Heart left ventricle (tissue), 16 donors: ENCODE measurements at regions of chr7 and their contacts with region 1.

Region 1: GRCh38 chr7:99616359-99617191 is at the start of gene ZSCAN25:
- DNase-seq: peak; percentile 83 to 93 (median 93)
- ATAC-seq: peak; percentile 98
- H3K4me3 ChIP-seq: peak within 1 kb of the TSS; percentile 74 to 99 (median 95)
- H3K27ac ChIP-seq: peak within 1 kb of the TSS; percentile 43 to 93 (median 86)
- H3K4me1 ChIP-seq: peaks cover 0 to 17% (median 11%) of the 10 kb centered on the region in 12 donors
- H3K27me3 ChIP-seq: no peaks in the 10 kb centered on the region
- CTCF ChIP-seq: peak in 11 of 12 donors; percentile 12 to 48 (median 43)
- POLR2A ChIP-seq: peak in 1 of 2 donors; percentile 78
- total RNA-seq, gene ZSCAN25: 5.6 to 12.0 (median 8.3) TPM

Region 2: GRCh38 chr7:99551767-99552463 is 64.7 kb before region 1 on chr7 and contains the start of gene FAM200A:
- intact Hi-C with region 1: loop called in 1 of 10 experiments (anchors 5 kb)
- DNase-seq: peak; percentile 91 to 94 (median 93)
- ATAC-seq: peak; percentile 98 to 100 (median 98)
- H3K4me3 ChIP-seq: peak within 1 kb of the TSS; percentile 54 to 99 (median 83)
- H3K27ac ChIP-seq: peak within 1 kb of the TSS; percentile 6 to 95 (median 86)
- H3K4me1 ChIP-seq: peaks cover 0 to 26% (median 15%) of the 10 kb centered on the region in 12 donors
- H3K27me3 ChIP-seq: no peaks in the 10 kb centered on the region
- CTCF ChIP-seq: no peak
- POLR2A ChIP-seq: peak in 1 of 2 donors; percentile 72
- total RNA-seq, gene FAM200A: 4.7 to 7.1 (median 5.3) TPM

Region 3: DNA sequence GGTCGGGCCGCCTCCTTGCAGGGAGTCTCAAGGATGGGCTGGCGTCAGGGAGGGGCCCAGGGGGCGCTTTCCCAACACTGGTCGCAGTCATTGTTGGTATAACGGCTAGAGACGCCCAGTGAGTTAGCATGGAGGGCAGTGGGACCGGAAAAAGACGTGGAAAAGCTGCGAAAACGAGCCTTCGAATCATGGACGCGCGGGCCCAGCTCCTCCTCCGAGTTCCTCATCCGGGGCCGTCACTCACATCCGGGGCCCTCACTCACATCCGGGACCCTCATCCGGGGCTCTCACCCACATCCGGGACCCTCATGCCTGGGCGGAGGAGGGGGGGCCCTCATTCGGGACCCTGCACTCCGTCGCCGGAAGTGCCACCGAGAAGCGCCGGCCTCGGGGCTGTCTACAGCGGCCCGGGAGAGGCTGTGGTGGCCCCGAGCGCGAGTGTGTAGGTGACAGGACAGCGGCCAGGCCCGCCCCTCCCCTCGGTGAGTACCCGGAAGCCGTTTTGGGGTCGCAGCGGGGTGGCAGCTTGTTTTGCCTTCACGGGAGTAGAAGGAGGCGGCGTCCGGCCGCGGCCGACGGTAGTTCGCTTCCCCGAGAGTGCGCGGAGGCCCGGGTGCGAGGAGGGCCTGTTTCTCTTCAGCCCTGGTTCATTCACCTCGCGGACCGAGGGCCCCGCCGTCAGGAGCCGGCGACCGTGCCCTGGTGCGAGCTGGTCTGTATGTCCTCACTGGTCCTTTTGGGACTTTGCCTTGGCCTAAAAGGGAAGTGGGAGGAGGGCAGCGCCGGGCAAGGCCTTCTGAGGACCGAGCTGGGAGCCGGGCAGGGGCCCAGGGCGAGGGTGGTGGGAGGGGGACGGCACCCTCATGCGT is 58.0 kb before region 1 on chr7 and contains the start of gene ZNF655:
- intact Hi-C with region 1: loop called in 3 of 10 experiments (anchors 1 to 5 kb)
- DNase-seq: peak; percentile 93 to 95 (median 94)
- ATAC-seq: peak; percentile 96 to 98 (median 98)
- H3K4me3 ChIP-seq: peak within 1 kb of the TSS; percentile 58 to 99 (median 88)
- H3K27ac ChIP-seq: peak within 1 kb of the TSS; percentile 91 to 99 (median 96)
- H3K4me1 ChIP-seq: peaks cover 0 to 46% (median 23%) of the 10 kb centered on the region in 12 donors
- H3K27me3 ChIP-seq: no peaks in the 10 kb centered on the region
- CTCF ChIP-seq: peak in 2 of 12 donors; percentile 2 to 6
- POLR2A ChIP-seq: peak in 1 of 2 donors; percentile 70
- total RNA-seq, gene ZNF655: 26.8 to 48.0 (median 32.8) TPM

Region 4: GRCh38 chr7:99740573-99741440 is 124.2 kb after region 1 on chr7:
- intact Hi-C with region 1: no loop called
- DNase-seq: no peak
- ATAC-seq: no peak
- H3K4me3 ChIP-seq: no peak overlapping the region
- H3K27ac ChIP-seq: no peak overlapping the region
- H3K4me1 ChIP-seq: no peaks in the 10 kb centered on the region
- H3K27me3 ChIP-seq: no peaks in the 10 kb centered on the region
- CTCF ChIP-seq: no peak
- POLR2A ChIP-seq: no peak

Region 5: GRCh38 chr7:99752390-99752789 is 135.8 kb after region 1 on chr7:
- intact Hi-C with region 1: no loop called
- DNase-seq: no peak
- ATAC-seq: no peak
- H3K4me3 ChIP-seq: no peak overlapping the region
- H3K27ac ChIP-seq: no peak overlapping the region
- H3K4me1 ChIP-seq: peaks cover 0 to 3% (median 0%) of the 10 kb centered on the region in 12 donors
- H3K27me3 ChIP-seq: no peaks in the 10 kb centered on the region
- CTCF ChIP-seq: no peak
- POLR2A ChIP-seq: no peak

Region 6: DNA sequence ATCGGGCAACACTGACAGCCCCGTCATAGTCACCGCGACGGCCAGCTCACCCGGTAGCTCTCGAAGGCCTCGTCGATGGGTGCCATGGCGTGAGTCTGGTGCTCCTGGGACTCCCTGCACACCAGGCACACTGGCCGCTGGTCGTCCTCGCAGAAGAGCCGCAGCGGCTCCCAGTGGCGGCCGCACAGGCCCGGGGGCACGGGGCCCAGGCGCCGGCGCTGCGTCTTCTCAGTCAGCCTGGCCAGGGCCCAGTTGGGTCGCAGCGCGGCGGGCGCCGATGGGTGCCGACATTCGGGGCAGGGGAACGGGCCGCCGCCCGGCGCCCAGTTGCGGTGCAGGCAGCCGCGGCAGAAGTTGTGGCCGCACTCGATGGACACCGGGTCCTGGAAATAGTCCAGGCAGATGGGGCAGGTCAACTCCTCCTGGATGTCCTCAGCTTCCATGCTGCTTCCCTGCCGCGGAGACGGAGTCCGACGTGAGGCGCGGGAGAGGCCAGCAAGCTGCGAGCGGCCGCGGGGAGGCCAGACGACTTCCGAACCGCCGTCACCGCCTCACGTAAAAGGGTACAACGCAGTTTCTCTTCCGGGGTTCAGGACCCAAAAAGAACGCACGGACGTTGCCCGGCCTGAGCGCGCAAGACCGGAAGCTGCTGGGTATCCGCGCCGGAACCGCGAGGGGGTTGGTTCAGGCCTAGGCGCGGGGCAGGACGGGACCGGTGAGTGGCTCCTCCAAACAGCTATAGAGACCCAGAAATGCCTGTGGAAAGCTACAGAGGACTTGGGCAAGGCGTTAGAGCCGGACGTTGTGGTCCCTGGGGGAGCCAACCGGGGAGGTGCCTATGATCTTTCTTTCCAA is 302.6 kb after region 1 on chr7 and contains the start of gene TRIM4:
- intact Hi-C with region 1: loop called in 1 of 10 experiments (anchors 10 kb)
- DNase-seq: peak; percentile 92 to 95 (median 95)
- ATAC-seq: peak; percentile 99 to 100 (median 99)
- H3K4me3 ChIP-seq: peak within 1 kb of the TSS; percentile 57 to 97 (median 81)
- H3K27ac ChIP-seq: peak within 1 kb of the TSS; percentile 51 to 97 (median 92)
- H3K4me1 ChIP-seq: peaks cover 9 to 42% (median 31%) of the 10 kb centered on the region in 12 donors
- H3K27me3 ChIP-seq: no peaks in the 10 kb centered on the region
- CTCF ChIP-seq: peak in 5 of 12 donors; percentile 13 to 45 (median 41)
- POLR2A ChIP-seq: peak in 1 of 2 donors; percentile 88
- total RNA-seq, gene TRIM4: 4.7 to 13.5 (median 7.3) TPM